Heart right ventricle (tissue), 16 donors: ENCODE measurements at regions of chr16 and their contacts with region 1.

Region 1: DNA sequence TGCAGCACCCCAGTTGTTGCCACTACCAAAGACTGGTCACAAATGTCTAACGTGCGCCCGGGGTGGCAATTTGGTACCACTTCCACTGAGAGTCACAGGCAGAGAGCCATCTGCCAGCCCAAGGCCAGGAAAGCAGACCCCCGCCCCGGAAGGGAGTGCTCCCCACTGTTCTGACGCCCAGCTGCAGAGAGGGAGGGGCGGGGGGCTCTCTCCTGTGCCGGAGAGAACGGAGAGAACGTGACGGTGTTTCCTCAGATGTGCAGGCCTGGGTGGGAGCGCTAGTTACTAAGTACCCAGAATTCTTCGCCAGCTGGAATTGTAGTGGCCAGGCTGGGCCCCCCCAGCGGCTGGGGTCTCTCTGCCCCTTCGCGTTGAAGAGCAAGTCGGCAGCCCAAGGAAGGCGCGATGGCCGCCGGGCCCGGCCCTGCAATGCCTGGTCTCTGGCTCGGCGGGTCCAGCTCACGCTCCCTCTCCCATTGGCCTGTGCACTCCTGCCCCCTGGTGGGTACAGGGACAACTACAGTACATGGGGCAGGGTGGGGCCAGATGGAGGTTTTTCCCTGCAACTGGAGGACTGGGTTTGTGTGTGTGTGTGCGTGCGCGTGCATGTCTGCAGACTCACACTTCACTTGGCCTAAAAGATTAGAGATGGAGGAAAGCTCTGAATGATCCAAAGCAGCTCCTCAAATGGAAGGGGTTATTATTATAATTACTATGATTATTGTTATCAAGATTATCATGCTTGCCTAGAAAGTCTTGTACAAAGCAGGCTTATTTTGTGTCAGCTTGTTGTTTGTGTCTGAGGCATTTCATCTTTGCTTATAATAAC is 107.1 kb downstream of the AMFR start:
- DNase-seq: peak; percentile 80 to 85
- ATAC-seq: peak; percentile 95 to 98 (median 96)
- H3K4me3 ChIP-seq: peak overlapping the region in 8 of 10 donors; percentile 12 to 41 (median 37)
- H3K27ac ChIP-seq: peak overlapping the region in 1 of 10 donors; percentile 37
- H3K4me1 ChIP-seq: peaks cover 0 to 12% (median 8%) of the 10 kb centered on the region in 9 donors
- H3K27me3 ChIP-seq: peaks cover 0 to 6% (median 0%) of the 10 kb centered on the region in 7 donors
- CTCF ChIP-seq: peak; percentile 86 to 97 (median 94)

Region 2: DNA sequence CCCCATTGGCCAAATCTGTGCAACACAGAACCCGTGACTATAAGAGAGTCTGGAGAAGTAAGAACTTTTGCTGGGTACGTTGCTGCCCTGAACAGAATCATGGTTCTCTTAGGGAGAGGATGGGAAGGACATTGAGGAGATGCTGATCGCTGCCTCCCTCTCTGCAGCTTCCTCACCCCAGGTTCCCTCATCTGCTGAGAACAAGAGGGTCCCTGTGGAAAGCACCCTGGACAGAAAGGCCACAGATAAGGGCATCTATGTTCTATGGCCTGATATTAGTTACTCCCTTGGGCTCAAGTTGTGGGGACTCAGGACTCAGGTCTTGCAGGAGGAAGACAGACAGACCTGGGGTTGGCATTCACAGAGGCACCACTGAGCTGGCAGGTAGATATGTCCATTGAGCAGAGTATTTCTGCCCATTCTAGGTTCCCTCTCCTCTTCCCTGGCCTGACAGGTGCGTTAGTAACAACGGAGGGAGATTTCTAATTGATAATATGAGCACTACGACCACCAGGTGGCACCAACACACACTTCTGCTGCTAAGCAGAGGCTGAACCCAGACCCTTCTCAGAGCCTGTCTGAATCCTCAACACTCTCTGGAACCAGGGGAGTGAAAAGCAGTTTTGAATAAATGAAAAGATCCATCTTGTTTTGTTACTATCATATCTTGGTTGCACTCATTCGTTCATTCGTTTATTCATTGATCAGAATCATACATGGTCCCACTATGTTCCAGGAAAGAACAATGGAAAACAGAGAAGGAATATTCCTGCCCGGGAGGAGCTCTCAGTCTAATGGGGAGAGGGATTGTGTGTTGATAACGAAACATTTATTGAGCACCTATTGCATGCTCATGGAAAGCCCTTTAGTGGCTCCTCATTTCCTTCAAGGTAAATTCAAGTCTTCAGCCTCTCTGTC is 606.0 kb before region 1 on chr16:
- intact Hi-C with region 1: loop called in 3 of 10 experiments (anchors 10 kb)
- DNase-seq: peak; percentile 54 to 59
- ATAC-seq: peak in 6 of 8 donors; percentile 53 to 72 (median 64)
- H3K4me3 ChIP-seq: no peak overlapping the region
- H3K27ac ChIP-seq: no peak overlapping the region
- H3K4me1 ChIP-seq: no peaks in the 10 kb centered on the region
- H3K27me3 ChIP-seq: peaks cover 0 to 69% (median 15%) of the 10 kb centered on the region in 7 donors
- CTCF ChIP-seq: peak; percentile 50 to 81 (median 74)

Region 3: GRCh38 chr16:55944377-55944802 is 373.8 kb before region 1 on chr16:
- intact Hi-C with region 1: loop called (anchors 1 to 5 kb)
- DNase-seq: peak; percentile 59 to 72
- ATAC-seq: peak; percentile 84 to 93 (median 92)
- H3K4me3 ChIP-seq: no peak overlapping the region
- H3K27ac ChIP-seq: peak overlapping the region in 1 of 10 donors; percentile 33
- H3K4me1 ChIP-seq: peaks cover 0 to 11% (median 0%) of the 10 kb centered on the region in 9 donors
- H3K27me3 ChIP-seq: peaks cover 0 to 8% (median 3%) of the 10 kb centered on the region in 7 donors
- CTCF ChIP-seq: peak; percentile 79 to 95 (median 92)

Region 4: DNA sequence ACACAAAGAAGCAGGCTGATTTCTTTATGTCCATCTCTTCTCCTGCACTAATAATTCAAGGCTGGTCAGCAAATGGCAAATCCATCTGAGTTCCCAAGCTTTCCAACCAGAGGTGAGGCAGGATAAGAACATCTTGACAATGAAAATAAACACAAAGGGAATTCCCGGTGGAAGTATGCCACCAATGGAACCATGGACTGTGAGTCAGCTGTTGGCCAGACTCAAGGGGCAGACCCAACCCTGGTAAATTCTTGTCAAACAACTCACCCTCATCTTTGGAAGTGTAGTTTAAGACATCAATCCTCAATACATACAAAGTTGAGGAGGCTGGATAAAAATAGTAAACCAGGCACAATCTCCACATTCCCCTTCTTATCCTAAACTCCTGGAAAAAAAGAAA is 368.7 kb before region 1 on chr16:
- intact Hi-C with region 1: loop called (anchors 1 to 5 kb)
- DNase-seq: no peak
- ATAC-seq: no peak
- H3K4me3 ChIP-seq: no peak overlapping the region
- H3K27ac ChIP-seq: no peak overlapping the region
- H3K4me1 ChIP-seq: peaks cover 0 to 3% (median 0%) of the 10 kb centered on the region in 9 donors
- H3K27me3 ChIP-seq: peaks cover 0 to 6% (median 0%) of the 10 kb centered on the region in 7 donors
- CTCF ChIP-seq: no peak

Region 5: GRCh38 chr16:56041686-56042085 is 276.5 kb before region 1 on chr16:
- intact Hi-C with region 1: loop called (anchors 2 to 5 kb)
- DNase-seq: peak in 1 of 2 donors; percentile 15
- ATAC-seq: peak; percentile 51 to 93 (median 86)
- H3K4me3 ChIP-seq: no peak overlapping the region
- H3K27ac ChIP-seq: no peak overlapping the region
- H3K4me1 ChIP-seq: no peaks in the 10 kb centered on the region
- H3K27me3 ChIP-seq: no peaks in the 10 kb centered on the region
- CTCF ChIP-seq: peak in 8 of 9 donors; percentile 27 to 65 (median 50)